ENCODE measurements at regions of chr22 and their contacts with region 1.

Region 1: DNA sequence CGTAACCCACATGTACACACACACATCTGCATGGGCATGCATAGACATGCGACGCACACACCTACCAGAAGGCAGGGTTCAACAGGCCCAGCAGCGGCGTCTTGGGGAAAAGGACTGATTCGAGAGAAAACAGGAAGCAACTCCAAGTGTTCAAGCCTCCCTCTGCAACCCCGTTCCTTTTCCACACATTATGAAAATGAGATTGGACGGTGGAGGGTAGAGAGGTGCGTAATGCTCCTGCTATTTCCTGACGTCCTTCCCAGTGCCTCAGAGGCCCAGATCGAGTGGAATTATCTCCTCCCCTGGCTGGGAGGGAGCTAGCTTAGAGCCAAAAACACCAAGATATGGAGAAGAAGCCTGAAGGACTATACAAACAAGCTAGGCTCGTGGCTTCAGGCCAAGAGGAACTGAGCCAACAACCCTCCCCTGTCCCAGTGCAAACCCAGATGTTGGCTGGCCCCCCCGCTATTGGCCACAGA is 289.2 kb downstream of the MN1 start:
- DNase-seq: peak; percentile 92 to 94
- ATAC-seq: peak; percentile 85
- H3K4me3 ChIP-seq: no peak overlapping the region
- H3K27ac ChIP-seq: peak overlapping the region in 1 of 2 donors; percentile 78
- H3K4me1 ChIP-seq: peaks cover 2% of the 10 kb centered on the region in 2 donors
- H3K27me3 ChIP-seq: no peaks in the 10 kb centered on the region

Region 2: DNA sequence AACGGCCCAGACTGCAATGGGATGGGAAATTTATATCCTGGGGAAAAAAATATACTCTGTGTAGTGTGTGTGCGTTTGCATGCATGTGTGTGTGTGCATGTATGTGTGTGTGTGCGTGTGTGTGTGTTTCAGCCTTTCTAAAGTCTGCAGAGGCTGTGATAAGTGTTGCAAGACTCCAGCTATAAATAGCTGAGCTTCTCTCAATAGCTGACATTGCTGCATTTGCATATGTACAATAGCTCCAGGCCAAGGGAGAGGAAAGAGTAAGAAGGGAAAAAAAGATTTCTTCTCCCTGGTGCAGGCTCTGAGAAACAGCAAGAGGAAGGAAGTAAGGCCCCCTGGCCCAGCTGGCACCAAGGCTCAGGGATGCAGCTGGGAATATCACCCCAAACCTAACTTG is 193.8 kb before region 1 on chr22:
- intact Hi-C with region 1: no loop called
- DNase-seq: peak in 1 of 2 donors; percentile 11
- ATAC-seq: peak; percentile 31
- H3K4me3 ChIP-seq: no peak overlapping the region
- H3K27ac ChIP-seq: no peak overlapping the region
- H3K4me1 ChIP-seq: no peaks in the 10 kb centered on the region
- H3K27me3 ChIP-seq: no peaks in the 10 kb centered on the region

Region 3: GRCh38 chr22:27409299-27409698 is 103.0 kb before region 1 on chr22:
- intact Hi-C with region 1: no loop called
- DNase-seq: no peak
- ATAC-seq: no peak
- H3K4me3 ChIP-seq: no peak overlapping the region
- H3K27ac ChIP-seq: no peak overlapping the region
- H3K4me1 ChIP-seq: no peaks in the 10 kb centered on the region
- H3K27me3 ChIP-seq: no peaks in the 10 kb centered on the region

Region 4: DNA sequence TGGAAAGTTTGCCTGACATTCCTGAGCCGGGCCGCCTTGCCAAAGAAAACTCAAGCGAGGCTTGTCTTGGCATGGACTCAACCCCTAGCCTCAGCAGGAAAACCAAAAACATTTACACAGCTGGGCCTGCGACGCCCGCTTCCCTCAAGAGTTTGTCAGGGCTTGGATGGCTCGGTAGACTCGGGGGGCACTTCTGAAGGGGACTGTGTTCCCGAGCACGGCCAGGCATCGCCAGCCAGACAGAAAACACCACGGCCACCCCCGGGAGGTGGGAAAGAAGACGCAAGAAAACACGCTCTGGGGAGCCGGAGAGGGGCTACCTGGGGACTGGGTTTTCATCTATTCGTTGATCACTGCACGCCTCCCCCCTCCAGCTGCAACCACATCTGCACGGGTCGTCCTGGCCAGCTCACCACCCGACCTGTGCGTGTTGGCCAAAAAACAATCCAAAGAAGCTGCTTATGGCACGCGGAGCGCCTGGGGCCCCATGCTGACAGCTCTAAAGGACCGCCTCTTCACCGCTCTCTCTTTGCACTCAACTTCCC is 91.4 kb before region 1 on chr22:
- intact Hi-C with region 1: loop called in 1 of 2 experiments (anchors 5 kb)
- DNase-seq: peak; percentile 91 to 92
- ATAC-seq: peak; percentile 89
- H3K4me3 ChIP-seq: no peak overlapping the region
- H3K27ac ChIP-seq: peak overlapping the region; percentile 7 to 10
- H3K4me1 ChIP-seq: peaks cover 0 to 5% of the 10 kb centered on the region in 2 donors
- H3K27me3 ChIP-seq: no peaks in the 10 kb centered on the region

Region 5: DNA sequence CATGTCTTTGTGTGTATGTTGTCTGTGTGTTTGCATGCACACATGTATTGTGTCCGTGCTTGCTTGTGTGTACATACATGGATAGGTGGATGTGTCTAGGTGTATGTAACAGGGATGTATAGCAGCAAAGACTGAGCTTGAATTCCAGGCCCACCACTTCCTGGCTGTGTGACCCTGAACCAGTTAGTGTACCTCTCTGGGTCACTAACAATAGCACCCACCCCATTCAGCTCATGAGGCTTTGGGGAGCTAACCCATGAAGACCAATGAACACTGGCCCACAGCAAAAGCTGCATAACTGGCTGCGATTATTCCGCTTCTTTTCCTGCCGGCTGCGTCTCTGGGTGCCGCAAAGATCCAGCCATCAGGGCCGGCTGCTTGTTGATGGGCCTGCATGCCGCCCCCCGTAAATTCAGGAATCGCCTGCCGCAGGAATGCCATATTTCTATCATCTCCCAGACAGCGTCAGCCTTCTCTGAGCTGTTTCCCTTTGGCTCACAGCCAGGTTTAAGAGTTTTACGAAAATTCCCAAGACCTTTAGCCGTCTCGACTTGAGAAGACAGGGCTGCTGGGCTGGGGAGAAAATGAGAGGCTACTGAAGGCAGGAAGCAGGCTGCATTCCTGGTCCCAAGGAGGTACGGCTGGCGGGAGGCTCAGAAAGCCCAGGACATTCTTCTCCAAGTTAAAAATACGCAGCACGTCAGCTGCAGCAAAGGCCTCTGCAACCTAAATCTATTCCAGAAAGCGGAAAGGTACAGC is 64.7 kb after region 1 on chr22:
- intact Hi-C with region 1: no loop called
- DNase-seq: no peak
- ATAC-seq: no peak
- H3K4me3 ChIP-seq: no peak overlapping the region
- H3K27ac ChIP-seq: no peak overlapping the region
- H3K4me1 ChIP-seq: no peaks in the 10 kb centered on the region
- H3K27me3 ChIP-seq: no peaks in the 10 kb centered on the region

Region 6: DNA sequence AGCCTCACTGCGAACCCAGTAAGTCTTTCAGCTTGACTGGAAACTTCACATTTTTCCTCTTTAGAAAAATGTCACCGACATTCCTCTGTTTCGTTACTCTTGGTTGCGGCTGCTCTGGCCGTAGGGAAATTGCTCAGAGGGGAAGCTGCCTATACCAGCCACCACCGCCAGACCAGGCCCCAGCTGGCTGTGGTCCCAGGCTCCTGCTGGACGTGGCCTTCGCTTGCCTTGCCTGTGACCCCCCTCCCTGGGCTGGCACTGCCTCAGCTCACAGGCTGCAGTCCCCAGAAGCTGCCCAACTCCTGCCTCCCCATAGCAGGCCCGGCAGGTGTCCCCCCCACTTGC is 91.5 kb after region 1 on chr22:
- intact Hi-C with region 1: loop called in 1 of 2 experiments (anchors 10 kb)
- DNase-seq: peak; percentile 91 to 92
- ATAC-seq: no peak
- H3K4me3 ChIP-seq: no peak overlapping the region
- H3K27ac ChIP-seq: peak overlapping the region in 1 of 2 donors; percentile 3
- H3K4me1 ChIP-seq: no peaks in the 10 kb centered on the region
- H3K27me3 ChIP-seq: no peaks in the 10 kb centered on the region

Region 7: GRCh38 chr22:27780161-27780575 is 267.8 kb after region 1 on chr22:
- intact Hi-C with region 1: loop called (anchors 5 to 10 kb)
- DNase-seq: peak in 1 of 2 donors; percentile 70
- ATAC-seq: no peak
- H3K4me3 ChIP-seq: no peak overlapping the region
- H3K27ac ChIP-seq: no peak overlapping the region
- H3K4me1 ChIP-seq: no peaks in the 10 kb centered on the region
- H3K27me3 ChIP-seq: no peaks in the 10 kb centered on the region

Region 8: DNA sequence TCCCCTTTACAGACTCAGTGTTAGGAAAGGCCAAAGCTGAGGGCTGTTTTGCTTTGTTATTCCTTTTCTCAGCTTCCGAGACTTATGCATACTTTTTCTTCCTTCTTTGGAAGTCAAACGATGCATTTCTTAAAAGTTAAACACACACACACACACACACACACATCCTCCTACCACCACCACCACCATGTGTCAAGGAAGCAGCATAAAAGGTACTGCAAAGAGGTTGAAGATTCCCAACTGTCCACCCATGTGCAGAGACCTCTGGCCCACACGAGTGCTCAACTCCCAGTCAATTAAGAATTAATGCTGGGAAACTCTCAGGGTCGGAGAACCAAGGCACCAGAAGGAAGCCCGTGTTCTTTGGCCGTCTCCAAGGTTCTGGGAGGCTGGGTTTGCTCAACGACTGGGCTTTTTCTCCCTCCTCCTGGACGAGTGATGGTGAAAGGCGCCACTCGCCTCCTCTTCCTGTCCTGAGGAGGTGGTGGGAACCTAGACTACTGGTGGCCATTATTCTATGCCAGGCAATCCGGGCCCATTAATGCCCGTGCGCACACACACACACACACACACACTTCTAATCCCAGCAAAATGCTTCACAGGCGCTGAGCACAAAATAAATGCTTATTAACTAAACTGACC is 274.1 kb after region 1 on chr22:
- intact Hi-C with region 1: loop called (anchors 5 to 10 kb)
- DNase-seq: no peak
- ATAC-seq: peak; percentile 31
- H3K4me3 ChIP-seq: no peak overlapping the region
- H3K27ac ChIP-seq: peak overlapping the region; percentile 87 to 95
- H3K4me1 ChIP-seq: peaks cover 0 to 5% of the 10 kb centered on the region in 2 donors
- H3K27me3 ChIP-seq: no peaks in the 10 kb centered on the region

Region 9: DNA sequence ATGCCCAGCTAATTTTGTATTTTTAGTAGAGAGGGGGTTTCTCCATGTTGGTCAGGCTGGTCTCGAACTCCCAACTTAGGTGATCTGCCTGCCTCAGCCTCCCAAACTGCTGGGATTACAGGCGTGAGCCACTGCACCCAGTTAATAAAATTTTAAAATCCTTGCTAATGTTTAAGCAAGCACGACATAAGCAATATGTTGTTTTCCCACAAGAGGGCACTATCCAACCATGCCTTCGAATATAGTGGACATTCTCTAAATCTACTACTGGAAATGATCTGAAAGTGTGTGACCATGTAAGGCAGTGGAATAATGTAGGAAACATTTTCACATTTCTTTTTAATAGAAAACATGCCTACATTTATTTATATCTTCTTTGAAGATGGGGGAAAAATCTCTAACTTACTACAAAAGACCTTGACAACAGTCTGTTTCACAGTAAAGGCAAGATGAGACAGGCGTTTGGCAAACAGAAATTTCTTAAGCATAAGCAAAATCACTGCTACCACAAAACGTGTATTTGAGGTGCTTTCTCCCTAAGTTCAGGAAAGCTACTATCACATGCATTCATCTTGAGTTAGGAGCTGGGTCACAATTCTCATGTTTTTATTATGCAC is 368.6 kb after region 1 on chr22:
- intact Hi-C with region 1: loop called in 1 of 2 experiments (anchors 10 kb)
- DNase-seq: no peak
- ATAC-seq: peak; percentile 91
- H3K4me3 ChIP-seq: peak overlapping the region in 1 of 2 donors; percentile 34
- H3K27ac ChIP-seq: peak overlapping the region; percentile 2 to 77
- H3K4me1 ChIP-seq: peaks cover under 1 to 3% of the 10 kb centered on the region in 2 donors
- H3K27me3 ChIP-seq: no peaks in the 10 kb centered on the region